Panc1 (cell line): ENCODE measurements at regions of chr1 and their contacts with region 1.

Region 1: DNA sequence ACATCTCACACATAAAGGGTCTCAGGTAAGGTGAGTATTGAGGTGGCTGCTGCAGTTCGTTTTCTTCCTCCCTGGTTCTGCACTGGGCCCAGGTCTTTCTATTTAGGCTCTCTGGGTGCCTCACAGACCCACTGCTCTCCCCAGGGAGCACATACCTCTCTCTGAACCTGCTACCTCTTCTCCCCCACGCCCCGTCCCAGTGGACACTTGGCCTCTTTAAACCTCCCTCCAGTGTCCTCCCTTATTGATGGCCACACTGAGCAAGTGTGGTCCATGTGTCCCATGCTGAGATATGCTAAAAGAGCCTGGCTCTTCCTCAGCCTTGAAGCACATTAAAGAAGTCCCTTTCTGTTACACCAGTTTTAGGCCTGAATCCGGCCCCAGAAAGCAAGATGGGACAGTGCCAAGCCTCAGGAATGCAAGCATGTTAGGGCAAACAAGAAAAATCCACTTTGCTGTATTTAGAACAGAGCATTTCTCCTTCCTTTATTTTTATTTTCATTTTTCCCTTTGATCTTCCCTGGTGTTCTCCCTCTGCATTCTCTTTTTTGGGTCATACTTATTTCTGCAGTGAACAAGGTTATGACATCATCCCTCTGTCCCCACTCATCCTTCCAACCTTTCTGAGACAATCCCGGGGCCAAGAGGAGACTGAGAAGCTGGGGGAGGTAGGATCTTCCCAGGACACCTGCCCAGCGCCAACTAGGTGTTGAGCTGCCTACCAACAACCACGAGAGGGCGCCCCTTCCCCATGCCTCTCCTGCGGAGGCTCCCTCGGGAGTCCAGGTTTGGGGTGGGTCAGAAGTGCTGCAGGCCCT is 5.0 kb upstream of the CHI3L2 start:
- DNase-seq: peak; percentile 53
- ATAC-seq: peak; percentile 96
- H3K4me3 ChIP-seq: no peak overlapping the region
- H3K27ac ChIP-seq: no peak overlapping the region
- H3K4me1 ChIP-seq: peaks cover 8% of the 10 kb centered on the region
- H3K27me3 ChIP-seq: no peaks in the 10 kb centered on the region
- CTCF ChIP-seq: peak; percentile 91

Region 2: DNA sequence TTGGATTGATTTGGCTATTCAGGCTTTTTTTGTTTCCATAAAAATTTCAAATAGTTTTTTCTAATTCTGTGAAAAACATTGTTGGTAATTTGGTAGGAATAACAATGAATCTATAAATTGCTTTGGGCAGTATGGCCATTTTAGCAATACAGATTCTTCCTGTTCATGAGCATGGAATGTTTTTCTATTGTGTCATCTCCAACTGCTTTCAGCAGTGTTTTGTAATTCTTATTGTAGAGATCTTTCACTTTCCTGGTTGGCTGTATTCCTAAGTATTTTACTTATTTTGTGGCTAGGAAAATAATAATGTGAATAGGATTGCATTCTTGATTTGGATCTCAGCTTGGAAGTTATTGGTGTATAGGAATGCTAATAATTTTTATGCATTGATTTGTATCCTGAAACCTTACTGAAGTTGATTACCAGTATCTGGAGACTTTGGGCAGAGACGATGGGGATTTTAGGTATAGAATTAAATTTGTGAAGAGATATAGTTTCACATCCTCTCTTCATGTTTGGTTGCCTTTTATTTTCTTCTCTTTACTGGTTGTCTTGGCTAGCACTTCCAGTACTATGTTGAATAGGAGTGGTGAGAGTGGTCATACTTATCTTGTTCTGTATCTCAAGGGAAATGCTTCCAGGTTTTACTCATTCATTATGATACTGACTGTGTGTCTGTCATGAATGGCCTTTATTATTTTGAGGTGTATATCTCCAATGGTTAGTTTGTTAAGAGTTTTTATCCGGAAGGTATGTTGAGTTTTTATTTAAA is 139.9 kb before region 1 on chr1:
- CTCF ChIA-PET with region 1: no interaction called
- POLR2A ChIA-PET with region 1: no interaction called
- in situ Hi-C with region 1: no loop called
- intact Hi-C with region 1: no loop called
- DNase-seq: no peak
- ATAC-seq: no peak
- H3K4me3 ChIP-seq: no peak overlapping the region
- H3K27ac ChIP-seq: no peak overlapping the region
- H3K4me1 ChIP-seq: no peaks in the 10 kb centered on the region
- H3K27me3 ChIP-seq: no peaks in the 10 kb centered on the region
- CTCF ChIP-seq: no peak

Region 3: GRCh38 chr1:111334169-111334568 is 111.7 kb after region 1 on chr1:
- CTCF ChIA-PET with region 1: interaction called, 6 read pairs
- POLR2A ChIA-PET with region 1: no interaction called
- in situ Hi-C with region 1: no loop called
- intact Hi-C with region 1: loop called (anchors 1 kb)
- DNase-seq: no peak
- ATAC-seq: peak; percentile 79
- H3K4me3 ChIP-seq: no peak overlapping the region
- H3K27ac ChIP-seq: no peak overlapping the region
- H3K4me1 ChIP-seq: no peaks in the 10 kb centered on the region
- H3K27me3 ChIP-seq: no peaks in the 10 kb centered on the region
- CTCF ChIP-seq: peak; percentile 68

Region 4: GRCh38 chr1:111399792-111400610 is 177.5 kb after region 1 on chr1:
- CTCF ChIA-PET with region 1: interaction called, 8 read pairs
- POLR2A ChIA-PET with region 1: no interaction called
- in situ Hi-C with region 1: no loop called
- intact Hi-C with region 1: loop called (anchors 2 kb)
- DNase-seq: peak; percentile 1
- ATAC-seq: no peak
- H3K4me3 ChIP-seq: no peak overlapping the region
- H3K27ac ChIP-seq: no peak overlapping the region
- H3K4me1 ChIP-seq: no peaks in the 10 kb centered on the region
- H3K27me3 ChIP-seq: peaks cover 2% of the 10 kb centered on the region; the same call in 1 of the 2 replicates
- CTCF ChIP-seq: peak; percentile 62